ENCODE measurements at regions of chr3 and their contacts with region 1.

Region 1: GRCh38 chr3:173553635-173554280 is 156.2 kb downstream of the NLGN1 start:
- DNase-seq: no peak
- ATAC-seq: no peak
- H3K4me3 ChIP-seq: no peak overlapping the region
- H3K27ac ChIP-seq: no peak overlapping the region
- H3K4me1 ChIP-seq: no peaks in the 10 kb centered on the region
- H3K27me3 ChIP-seq: no peaks in the 10 kb centered on the region
- CTCF ChIP-seq: peak; percentile 65

Region 2: DNA sequence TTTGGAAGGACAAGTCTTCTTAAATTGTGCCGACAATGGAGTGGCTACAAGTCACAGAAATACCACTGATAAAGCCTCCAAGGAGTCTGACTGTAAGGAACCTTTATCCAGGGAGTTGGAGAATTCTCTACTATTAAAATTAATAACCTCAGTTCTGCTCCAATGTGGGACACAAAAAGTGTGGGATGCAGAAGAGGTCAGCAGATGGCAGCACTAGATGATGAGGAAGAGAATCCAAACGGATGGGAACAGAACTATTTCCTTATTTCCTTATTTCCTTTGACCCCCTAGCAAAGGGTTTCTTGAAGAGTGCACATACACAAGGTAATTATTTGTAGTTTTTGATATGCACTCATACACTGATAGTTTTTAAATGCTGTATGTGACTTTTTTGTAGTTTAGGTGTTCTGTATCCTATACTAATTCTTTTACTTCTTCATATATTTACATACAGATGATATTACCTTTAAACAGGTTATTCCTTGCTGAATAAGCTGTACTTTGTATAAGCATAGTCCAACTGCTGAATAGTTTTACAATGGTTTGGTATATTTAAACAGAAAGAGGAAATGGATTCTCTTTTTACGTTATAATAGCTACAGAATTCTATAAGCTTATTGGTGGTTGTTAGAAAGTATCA is 181.8 kb before region 1 on chr3:
- intact Hi-C with region 1: loop called in 1 of 2 experiments (anchors 5 kb)
- DNase-seq: no peak
- ATAC-seq: no peak
- H3K4me3 ChIP-seq: no peak overlapping the region
- H3K27ac ChIP-seq: no peak overlapping the region
- H3K4me1 ChIP-seq: no peaks in the 10 kb centered on the region
- H3K27me3 ChIP-seq: no peaks in the 10 kb centered on the region
- CTCF ChIP-seq: peak; percentile 56